ENCODE measurements at regions of chr12 and their contacts with region 1.

Region 1: GRCh38 chr12:93569656-93570551 is 2.6 kb upstream of the SOCS2 start:
- DNase-seq: peak; percentile 34 to 76 (median 66)
- ATAC-seq: peak; percentile 58
- H3K4me3 ChIP-seq: peak overlapping the region; percentile 89
- H3K4me3 Mint-ChIP-seq: peak overlapping the region; percentile 88 to 98 (median 93)
- H3K27ac ChIP-seq: peak overlapping the region; percentile 78
- H3K27ac Mint-ChIP-seq: peak overlapping the region; percentile 70 to 91 (median 84)
- H3K4me1 ChIP-seq: peaks cover 14 to 16% of the 10 kb centered on the region in 2 donors
- H3K4me1 Mint-ChIP-seq: peaks cover 24 to 37% (median 30%) of the 10 kb centered on the region in 7 donors
- H3K27me3 ChIP-seq: no peaks in the 10 kb centered on the region
- H3K27me3 Mint-ChIP-seq: peaks cover 0 to 15% (median 0%) of the 10 kb centered on the region in 5 donors

Region 2: GRCh38 chr12:93441617-93442410 is 128.1 kb before region 1 on chr12 and contains the start of gene UBE2N:
- CTCF ChIA-PET with region 1: no interaction called
- POLR2A ChIA-PET with region 1: no interaction called
- intact Hi-C with region 1: loop called (anchors 1 kb)
- DNase-seq: peak; percentile 96 to 98 (median 97)
- ATAC-seq: peak; percentile 95
- H3K4me3 ChIP-seq: peak within 1 kb of the TSS; percentile 66
- H3K4me3 Mint-ChIP-seq: peak within 1 kb of the TSS; percentile 89 to 100 (median 97)
- H3K27ac ChIP-seq: peak within 1 kb of the TSS; percentile 98
- H3K27ac Mint-ChIP-seq: peak within 1 kb of the TSS; percentile 96 to 100 (median 98)
- H3K4me1 ChIP-seq: peaks cover 35 to 48% of the 10 kb centered on the region in 2 donors
- H3K4me1 Mint-ChIP-seq: peaks cover 44 to 54% (median 49%) of the 10 kb centered on the region in 7 donors
- H3K27me3 ChIP-seq: no peaks in the 10 kb centered on the region
- H3K27me3 Mint-ChIP-seq: no peaks in the 10 kb centered on the region
- total RNA-seq, gene UBE2N: 76.6 to 180 (median 77.5) TPM

Region 3: DNA sequence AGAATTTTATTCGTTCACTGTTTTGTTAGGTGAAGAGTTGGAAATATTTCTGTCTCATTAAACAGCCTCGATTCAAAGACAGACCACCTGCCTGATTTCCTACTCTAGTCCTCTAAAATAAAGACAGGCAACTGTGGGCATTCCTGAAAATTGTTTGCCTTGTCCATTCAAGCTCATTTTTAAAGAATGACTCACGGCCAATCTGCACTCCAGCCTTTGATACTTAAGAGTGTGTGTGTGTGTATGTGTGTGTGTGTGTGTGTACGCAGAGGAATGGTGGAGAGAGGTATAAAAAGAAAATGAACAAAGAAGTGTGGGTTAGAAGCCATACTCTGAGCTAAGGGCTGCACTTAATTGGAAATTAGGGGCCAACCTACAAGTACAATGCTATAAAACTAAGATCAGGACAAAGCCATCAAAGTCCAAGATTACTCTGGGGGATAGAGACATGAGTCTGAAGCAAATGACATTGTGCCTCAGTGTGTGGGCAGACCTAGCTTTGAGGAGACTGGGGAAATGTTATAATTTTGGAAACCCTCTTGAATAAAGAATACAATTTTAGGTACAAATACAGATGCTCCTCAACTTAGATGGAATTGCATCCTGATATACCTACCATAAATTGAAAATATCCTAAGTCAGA is 43.0 kb before region 1 on chr12:
- CTCF ChIA-PET with region 1: no interaction called
- POLR2A ChIA-PET with region 1: no interaction called
- intact Hi-C with region 1: no loop called
- DNase-seq: no peak
- ATAC-seq: no peak
- H3K4me3 ChIP-seq: no peak overlapping the region
- H3K4me3 Mint-ChIP-seq: no peak overlapping the region
- H3K27ac ChIP-seq: no peak overlapping the region
- H3K27ac Mint-ChIP-seq: no peak overlapping the region
- H3K4me1 ChIP-seq: peaks cover 0 to 5% of the 10 kb centered on the region in 2 donors
- H3K4me1 Mint-ChIP-seq: peaks cover 9 to 25% (median 11%) of the 10 kb centered on the region in 7 donors
- H3K27me3 ChIP-seq: no peaks in the 10 kb centered on the region
- H3K27me3 Mint-ChIP-seq: peaks cover 0 to 10% (median 0%) of the 10 kb centered on the region in 5 donors

Region 4: DNA sequence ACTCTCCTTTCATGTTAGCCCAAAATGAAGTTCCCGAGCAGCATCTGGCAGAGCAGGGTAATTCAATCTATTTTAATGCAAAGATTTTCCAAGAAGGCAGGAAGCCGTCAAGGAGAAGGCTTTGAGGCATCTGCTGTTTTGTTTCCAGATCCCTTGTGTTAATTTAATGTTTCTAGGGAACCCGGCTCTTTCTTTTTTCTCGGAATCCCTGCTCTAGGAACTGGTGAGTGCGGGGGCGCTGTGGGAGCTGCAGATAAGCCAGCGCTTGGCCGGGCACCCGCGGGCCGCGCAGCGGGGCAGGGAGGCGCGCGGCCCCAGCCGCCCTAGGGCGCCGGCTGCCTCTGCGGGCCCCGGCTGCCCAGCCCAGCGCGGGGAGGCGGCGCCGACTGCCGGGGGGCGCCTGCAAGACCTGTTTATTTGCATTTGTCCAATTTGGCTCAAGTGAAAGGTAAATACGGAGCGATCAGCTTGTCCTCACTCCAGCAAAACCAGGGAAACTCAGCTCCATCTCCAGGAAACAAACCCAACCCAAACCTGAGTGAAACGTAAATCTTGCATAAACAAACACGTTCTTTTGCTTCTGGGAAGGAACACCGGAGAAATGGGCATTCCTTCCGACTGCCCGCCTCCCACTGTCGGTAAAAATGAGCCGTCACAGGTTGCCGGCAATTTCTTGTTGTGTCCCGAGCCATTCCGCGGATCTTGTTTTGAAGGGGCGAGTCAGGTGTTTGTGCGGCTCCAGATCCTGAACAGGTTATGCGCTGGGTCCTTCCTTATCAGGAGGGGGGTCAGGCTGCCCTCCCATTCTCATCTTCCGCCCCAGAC is 172.4 kb after region 1 on chr12:
- CTCF ChIA-PET with region 1: interaction called, 5 read pairs
- POLR2A ChIA-PET with region 1: no interaction called
- intact Hi-C with region 1: loop called (anchors 1 kb)
- DNase-seq: peak; percentile 25 to 63 (median 40)
- ATAC-seq: peak; percentile 96
- H3K4me3 ChIP-seq: peak overlapping the region; percentile 83
- H3K4me3 Mint-ChIP-seq: peak overlapping the region; percentile 83 to 97 (median 93)
- H3K27ac ChIP-seq: peak overlapping the region; percentile 74
- H3K27ac Mint-ChIP-seq: peak overlapping the region; percentile 29 to 98 (median 92)
- H3K4me1 ChIP-seq: peaks cover 0 to 13% of the 10 kb centered on the region in 2 donors
- H3K4me1 Mint-ChIP-seq: peaks cover 27 to 55% (median 41%) of the 10 kb centered on the region in 7 donors
- H3K27me3 ChIP-seq: no peaks in the 10 kb centered on the region
- H3K27me3 Mint-ChIP-seq: peaks cover 0 to 2% (median 0%) of the 10 kb centered on the region in 5 donors

Region 5: DNA sequence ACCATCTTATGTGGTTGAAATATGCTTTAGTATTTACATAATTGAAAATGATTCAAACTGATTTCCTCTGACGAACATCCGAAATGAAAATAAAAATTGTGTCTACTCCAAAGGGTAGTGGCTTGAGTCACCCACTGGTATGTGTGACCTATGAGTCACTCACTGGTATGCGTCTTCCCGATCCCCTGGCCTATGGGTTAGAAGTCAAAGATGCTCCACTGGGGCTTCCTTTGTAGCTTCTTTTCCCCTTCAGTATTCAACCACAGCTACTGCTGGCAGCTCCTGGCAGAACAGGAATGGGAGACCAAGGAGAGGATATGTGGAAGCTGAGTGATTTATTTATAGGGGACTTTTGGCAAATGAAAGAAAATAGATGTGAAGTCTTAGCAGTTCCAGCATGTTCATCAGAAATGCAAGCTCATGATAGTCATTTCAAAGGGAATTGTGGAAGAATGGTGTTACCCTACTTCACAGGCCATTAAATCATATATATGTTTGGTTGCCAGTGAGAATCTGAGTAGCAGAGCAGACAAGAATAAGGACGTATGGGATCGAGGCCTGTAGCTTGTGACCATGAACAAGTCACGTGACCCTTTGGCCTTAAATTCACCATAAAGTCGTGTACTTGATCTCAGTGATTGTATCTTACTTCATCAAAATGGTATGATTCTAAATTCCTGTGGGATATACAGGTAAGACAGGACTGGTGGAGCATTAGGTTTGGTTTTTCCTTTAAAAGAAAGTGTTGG is 215.5 kb after region 1 on chr12:
- CTCF ChIA-PET with region 1: no interaction called
- POLR2A ChIA-PET with region 1: no interaction called
- intact Hi-C with region 1: no loop called
- DNase-seq: peak in 2 of 9 donors; percentile 29 to 48
- ATAC-seq: peak; percentile 77
- H3K4me3 ChIP-seq: no peak overlapping the region
- H3K4me3 Mint-ChIP-seq: peak overlapping the region in 4 of 10 donors; percentile 2 to 87 (median 36)
- H3K27ac ChIP-seq: no peak overlapping the region
- H3K27ac Mint-ChIP-seq: peak overlapping the region in 7 of 9 donors; percentile 35 to 81 (median 58)
- H3K4me1 ChIP-seq: peaks cover 9 to 26% of the 10 kb centered on the region in 2 donors
- H3K4me1 Mint-ChIP-seq: peaks cover 26 to 64% (median 61%) of the 10 kb centered on the region in 7 donors
- H3K27me3 ChIP-seq: no peaks in the 10 kb centered on the region
- H3K27me3 Mint-ChIP-seq: no peaks in the 10 kb centered on the region

Region 6: DNA sequence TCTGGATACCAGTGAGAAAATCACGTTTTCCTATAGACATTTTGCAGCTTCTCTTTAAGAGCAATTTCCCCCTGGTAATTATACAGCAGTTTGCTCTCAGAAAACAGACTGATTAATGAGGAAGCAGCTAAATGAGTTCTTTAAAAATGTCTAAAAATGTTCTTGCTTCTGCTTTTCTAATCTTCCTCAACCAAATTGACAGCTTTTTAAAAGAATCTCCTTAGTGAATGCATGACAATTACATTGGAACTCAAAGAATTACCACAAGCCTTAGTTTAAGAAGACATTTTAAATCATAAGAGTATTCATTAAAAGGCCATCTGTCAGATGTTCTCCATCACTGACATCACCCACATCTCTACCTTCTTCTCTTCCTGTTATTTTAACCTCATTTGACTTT is 442.7 kb after region 1 on chr12:
- CTCF ChIA-PET with region 1: interaction called, 4 read pairs
- POLR2A ChIA-PET with region 1: no interaction called
- intact Hi-C with region 1: loop called in 1 of 2 experiments (anchors 1 kb)
- DNase-seq: no peak
- ATAC-seq: no peak
- H3K4me3 ChIP-seq: no peak overlapping the region
- H3K4me3 Mint-ChIP-seq: peak overlapping the region in 2 of 10 donors; percentile 2 to 5
- H3K27ac ChIP-seq: no peak overlapping the region
- H3K27ac Mint-ChIP-seq: peak overlapping the region in 6 of 9 donors; percentile 4 to 89 (median 40)
- H3K4me1 ChIP-seq: peaks cover 0 to 18% of the 10 kb centered on the region in 2 donors
- H3K4me1 Mint-ChIP-seq: peaks cover 12 to 64% (median 40%) of the 10 kb centered on the region in 7 donors
- H3K27me3 ChIP-seq: no peaks in the 10 kb centered on the region
- H3K27me3 Mint-ChIP-seq: no peaks in the 10 kb centered on the region

Region 7: GRCh38 chr12:94459728-94460615 is 890.1 kb after region 1 on chr12 and contains the start of gene CEP83:
- CTCF ChIA-PET with region 1: no interaction called
- POLR2A ChIA-PET with region 1: no interaction called
- intact Hi-C with region 1: loop called (anchors 1 kb)
- DNase-seq: peak; percentile 89 to 97 (median 94)
- ATAC-seq: peak; percentile 99
- H3K4me3 ChIP-seq: peak within 1 kb of the TSS; percentile 68
- H3K4me3 Mint-ChIP-seq: peak within 1 kb of the TSS; percentile 92 to 98 (median 96)
- H3K27ac ChIP-seq: peak within 1 kb of the TSS; percentile 91
- H3K27ac Mint-ChIP-seq: peak within 1 kb of the TSS; percentile 70 to 97 (median 94)
- H3K4me1 ChIP-seq: peaks cover 3 to 13% of the 10 kb centered on the region in 2 donors
- H3K4me1 Mint-ChIP-seq: peaks cover 10 to 38% (median 30%) of the 10 kb centered on the region in 7 donors
- H3K27me3 ChIP-seq: no peaks in the 10 kb centered on the region
- H3K27me3 Mint-ChIP-seq: peaks cover 0 to 12% (median 6%) of the 10 kb centered on the region in 5 donors
- total RNA-seq, gene CEP83: 12.8 to 22.7 (median 16.8) TPM

Region 8: GRCh38 chr12:95473884-95474659 is 1904.2 kb after region 1 on chr12 and contains the start of gene METAP2:
- CTCF ChIA-PET with region 1: no interaction called
- POLR2A ChIA-PET with region 1: no interaction called
- intact Hi-C with region 1: loop called in 1 of 2 experiments (anchors 5 kb)
- DNase-seq: peak; percentile 75 to 93 (median 87)
- ATAC-seq: peak; percentile 98
- H3K4me3 ChIP-seq: peak within 1 kb of the TSS; percentile 81
- H3K4me3 Mint-ChIP-seq: peak within 1 kb of the TSS; percentile 96 to 100 (median 99)
- H3K27ac ChIP-seq: peak within 1 kb of the TSS; percentile 92
- H3K27ac Mint-ChIP-seq: peak within 1 kb of the TSS; percentile 95 to 100 (median 99)
- H3K4me1 ChIP-seq: peaks cover 10 to 39% of the 10 kb centered on the region in 2 donors
- H3K4me1 Mint-ChIP-seq: peaks cover 31 to 70% (median 55%) of the 10 kb centered on the region in 7 donors
- H3K27me3 ChIP-seq: no peaks in the 10 kb centered on the region
- H3K27me3 Mint-ChIP-seq: no peaks in the 10 kb centered on the region
- total RNA-seq, gene METAP2: 48.2 to 79.9 (median 57.3) TPM